ENCODE measurements at regions of chr2 and their contacts with region 1.

Region 1: GRCh38 chr2:173402405-173402974 is 47.8 kb downstream of the CDCA7 start:
- DNase-seq: peak; percentile 69 to 83
- ATAC-seq: peak; percentile 93 to 99 (median 96)
- H3K4me3 ChIP-seq: peak overlapping the region; percentile 56
- H3K27ac ChIP-seq: no peak overlapping the region
- H3K4me1 ChIP-seq: peaks cover 6% of the 10 kb centered on the region
- H3K27me3 ChIP-seq: peaks cover 0 to 2% (median 0%) of the 10 kb centered on the region in 3 donors
- CTCF ChIP-seq: peak; percentile 86

Region 2: GRCh38 chr2:173298536-173299097 is 103.9 kb before region 1 on chr2:
- intact Hi-C with region 1: no loop called
- DNase-seq: no peak
- ATAC-seq: no peak
- H3K4me3 ChIP-seq: no peak overlapping the region
- H3K27ac ChIP-seq: no peak overlapping the region
- H3K4me1 ChIP-seq: no peaks in the 10 kb centered on the region
- H3K27me3 ChIP-seq: no peaks in the 10 kb centered on the region
- CTCF ChIP-seq: no peak

Region 3: DNA sequence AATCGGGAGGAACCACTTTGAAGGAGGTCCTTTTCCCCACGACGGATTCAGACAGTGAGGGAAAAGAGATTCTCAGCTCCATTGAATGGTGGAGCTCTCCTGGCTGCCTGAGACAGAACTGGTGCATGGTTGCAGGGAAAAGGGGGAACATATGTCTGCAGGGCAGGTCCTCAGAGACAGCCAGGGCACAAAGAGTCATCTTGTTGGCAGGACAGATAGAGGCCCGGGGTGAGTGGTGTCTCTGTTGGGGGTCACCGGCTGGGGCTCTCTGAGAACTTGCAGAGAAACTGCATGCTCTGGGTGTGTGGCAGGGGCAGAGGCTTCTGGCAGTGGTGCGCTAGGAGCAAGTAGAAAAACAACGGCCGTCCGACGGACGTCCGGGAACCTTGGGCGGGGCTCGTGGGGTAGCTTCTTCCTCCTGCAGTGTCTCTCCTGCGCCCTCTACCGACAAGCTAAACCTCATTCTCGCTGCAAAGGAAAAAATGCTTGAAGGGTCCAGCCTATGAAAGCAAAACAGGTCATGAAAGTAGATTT is 46.5 kb after region 1 on chr2:
- intact Hi-C with region 1: loop called (anchors 2 kb)
- DNase-seq: peak; percentile 68 to 84
- ATAC-seq: peak; percentile 81 to 94 (median 90)
- H3K4me3 ChIP-seq: peak overlapping the region; percentile 48
- H3K27ac ChIP-seq: peak overlapping the region; percentile 63
- H3K4me1 ChIP-seq: no peaks in the 10 kb centered on the region
- H3K27me3 ChIP-seq: no peaks in the 10 kb centered on the region
- CTCF ChIP-seq: peak; percentile 77

Region 4: DNA sequence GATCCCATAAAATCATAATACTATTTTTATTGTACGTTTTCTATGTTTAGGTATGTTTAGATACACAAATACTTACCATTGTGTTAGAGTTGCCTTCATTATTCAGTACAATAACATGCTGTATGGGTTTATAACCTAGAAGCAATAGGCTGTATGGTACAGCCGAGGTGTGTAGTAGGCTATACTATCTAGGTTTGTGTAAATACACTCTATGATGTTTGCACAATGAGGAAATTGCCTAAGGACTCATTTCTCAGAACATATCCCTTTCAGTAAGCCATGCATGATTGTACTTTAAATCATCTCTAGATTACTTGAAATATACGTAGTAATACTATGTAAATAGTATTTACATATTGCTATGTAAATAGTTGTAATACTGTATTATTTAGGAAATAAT is 108.9 kb after region 1 on chr2:
- intact Hi-C with region 1: no loop called
- DNase-seq: no peak
- ATAC-seq: no peak
- H3K4me3 ChIP-seq: no peak overlapping the region
- H3K27ac ChIP-seq: no peak overlapping the region
- H3K4me1 ChIP-seq: no peaks in the 10 kb centered on the region
- H3K27me3 ChIP-seq: no peaks in the 10 kb centered on the region
- CTCF ChIP-seq: no peak

Region 5: DNA sequence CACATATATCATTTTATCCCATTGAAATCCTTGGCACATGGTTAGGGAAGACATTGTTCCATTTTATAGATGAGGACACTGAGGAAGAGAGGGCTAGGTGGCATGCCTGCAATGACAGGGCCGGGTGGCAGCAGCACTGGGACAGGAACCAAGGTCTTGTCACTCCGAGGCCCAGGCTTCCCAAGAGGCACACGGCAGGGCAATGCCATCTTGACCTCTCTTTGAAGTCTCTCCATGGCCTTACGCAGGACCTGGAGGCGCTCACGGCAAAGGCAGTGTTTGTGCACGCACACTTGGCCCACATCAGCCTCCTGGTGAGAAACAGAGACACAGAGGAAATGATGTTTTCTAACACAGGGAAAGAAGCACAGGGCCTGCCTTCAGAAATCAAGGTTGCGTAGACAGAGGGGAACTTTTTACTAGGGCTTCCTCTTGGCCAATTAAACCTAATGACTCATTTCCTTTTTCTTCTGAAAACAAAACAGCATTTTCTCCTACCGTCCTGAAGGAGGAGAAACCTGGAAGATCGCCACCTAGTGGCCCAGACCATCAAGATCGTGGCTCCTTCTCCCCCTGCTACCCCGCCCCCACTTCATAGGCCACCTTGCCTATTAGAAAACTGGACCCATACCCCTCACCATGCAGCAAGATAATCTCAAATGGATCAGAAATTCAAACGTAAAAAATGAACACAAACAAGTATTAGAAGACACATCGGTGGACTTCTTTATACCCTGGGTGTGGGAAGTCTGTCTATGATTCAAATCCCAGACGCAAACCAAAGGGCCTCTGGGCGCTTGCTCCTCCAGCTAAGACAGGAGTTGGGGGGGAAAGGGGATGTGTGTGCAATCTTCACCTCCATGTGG is 637.3 kb after region 1 on chr2:
- intact Hi-C with region 1: loop called (anchors 2 to 10 kb)
- DNase-seq: peak; percentile 86 to 92
- ATAC-seq: peak; percentile 76 to 87 (median 80)
- H3K4me3 ChIP-seq: peak overlapping the region; percentile 40
- H3K27ac ChIP-seq: peak overlapping the region; percentile 75
- H3K4me1 ChIP-seq: peaks cover 20% of the 10 kb centered on the region
- H3K27me3 ChIP-seq: no peaks in the 10 kb centered on the region
- CTCF ChIP-seq: peak; percentile 78